Activated CD8-positive, alpha-beta T cell treated with anti-CD3 and anti-CD28 coated beads, Interleukin-2, amount 10 ng/mL, durations not matched to agents 7 days and 5 days (primary cell): ENCODE measurements at regions of chr2 and their contacts with region 1.

Region 1: GRCh38 chr2:120174963-120175581 is 48.1 kb downstream of the TMEM185B start:
- DNase-seq: peak; percentile 46
- ATAC-seq: no peak
- H3K4me3 Mint-ChIP-seq: no peak overlapping the region
- H3K27ac Mint-ChIP-seq: peak overlapping the region; percentile 64
- H3K4me1 Mint-ChIP-seq: peaks cover 51% of the 10 kb centered on the region
- H3K27me3 Mint-ChIP-seq: no peaks in the 10 kb centered on the region

Region 2: GRCh38 chr2:119721462-119721861 is 453.6 kb before region 1 on chr2:
- CTCF ChIA-PET with region 1: interaction called, 11 read pairs
- POLR2A ChIA-PET with region 1: no interaction called
- DNase-seq: no peak
- ATAC-seq: no peak
- H3K4me3 Mint-ChIP-seq: no peak overlapping the region
- H3K27ac Mint-ChIP-seq: no peak overlapping the region
- H3K4me1 Mint-ChIP-seq: peaks cover 10% of the 10 kb centered on the region
- H3K27me3 Mint-ChIP-seq: no peaks in the 10 kb centered on the region

Region 3: DNA sequence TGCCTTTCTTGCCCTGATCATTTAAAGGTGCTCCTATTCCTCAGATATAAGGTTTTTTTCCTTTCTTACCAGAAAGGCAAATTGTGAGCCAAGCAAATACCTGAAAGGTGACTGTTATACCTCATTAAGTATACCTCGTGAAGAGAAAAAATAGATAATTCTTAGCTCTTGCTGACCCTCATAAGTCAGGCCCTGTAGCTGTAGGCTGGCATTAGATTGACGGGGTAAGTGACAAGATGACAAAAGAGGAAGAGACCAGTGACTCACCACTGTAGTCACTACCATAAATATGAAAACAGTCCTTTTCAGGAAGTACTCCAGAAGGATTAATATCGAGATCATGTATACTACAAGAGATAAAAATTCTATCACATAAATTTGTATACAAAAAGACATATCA is 310.8 kb before region 1 on chr2:
- CTCF ChIA-PET with region 1: interaction called, 10 read pairs
- POLR2A ChIA-PET with region 1: no interaction called
- DNase-seq: no peak
- ATAC-seq: no peak
- H3K4me3 Mint-ChIP-seq: no peak overlapping the region
- H3K27ac Mint-ChIP-seq: no peak overlapping the region
- H3K4me1 Mint-ChIP-seq: peaks cover 50% of the 10 kb centered on the region
- H3K27me3 Mint-ChIP-seq: no peaks in the 10 kb centered on the region

Region 4: DNA sequence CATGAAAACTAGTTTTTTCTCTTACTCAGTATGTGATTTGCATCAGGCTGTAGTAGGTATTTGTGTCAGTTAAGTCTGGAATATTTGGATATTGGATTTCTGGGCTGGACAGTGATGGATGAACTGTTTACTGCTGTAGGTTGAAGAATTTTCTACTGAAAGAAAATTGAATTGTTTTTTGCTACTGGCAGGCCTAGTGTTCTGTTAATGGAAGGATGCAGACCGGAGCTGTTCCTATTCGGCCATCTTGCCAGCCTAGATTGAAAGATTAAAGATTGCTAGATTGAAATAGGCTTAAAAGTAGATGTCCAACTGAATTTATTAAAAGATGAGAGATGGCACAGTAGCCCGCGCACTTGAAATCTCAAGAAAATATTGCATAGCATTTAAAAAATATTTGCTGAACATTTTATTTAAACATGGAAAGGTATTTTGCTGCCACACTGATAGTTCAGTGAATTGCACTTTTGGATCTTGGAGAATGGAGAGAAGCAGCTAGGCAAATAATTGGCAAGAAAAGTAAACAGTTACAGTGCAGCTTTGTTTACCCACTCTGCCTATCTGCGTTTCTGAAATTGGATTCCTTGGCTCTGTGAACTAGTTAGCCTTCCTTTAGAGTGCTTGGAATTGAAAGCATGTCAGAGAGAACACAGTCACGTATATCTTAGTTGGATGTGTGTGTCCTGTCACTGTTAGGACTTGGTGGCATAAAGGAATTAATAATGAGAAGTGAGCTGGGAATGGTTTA is 108.1 kb before region 1 on chr2:
- CTCF ChIA-PET with region 1: no interaction called
- POLR2A ChIA-PET with region 1: no interaction called
- DNase-seq: no peak
- ATAC-seq: no peak
- H3K4me3 Mint-ChIP-seq: no peak overlapping the region
- H3K27ac Mint-ChIP-seq: no peak overlapping the region
- H3K4me1 Mint-ChIP-seq: no peaks in the 10 kb centered on the region
- H3K27me3 Mint-ChIP-seq: no peaks in the 10 kb centered on the region

Region 5: DNA sequence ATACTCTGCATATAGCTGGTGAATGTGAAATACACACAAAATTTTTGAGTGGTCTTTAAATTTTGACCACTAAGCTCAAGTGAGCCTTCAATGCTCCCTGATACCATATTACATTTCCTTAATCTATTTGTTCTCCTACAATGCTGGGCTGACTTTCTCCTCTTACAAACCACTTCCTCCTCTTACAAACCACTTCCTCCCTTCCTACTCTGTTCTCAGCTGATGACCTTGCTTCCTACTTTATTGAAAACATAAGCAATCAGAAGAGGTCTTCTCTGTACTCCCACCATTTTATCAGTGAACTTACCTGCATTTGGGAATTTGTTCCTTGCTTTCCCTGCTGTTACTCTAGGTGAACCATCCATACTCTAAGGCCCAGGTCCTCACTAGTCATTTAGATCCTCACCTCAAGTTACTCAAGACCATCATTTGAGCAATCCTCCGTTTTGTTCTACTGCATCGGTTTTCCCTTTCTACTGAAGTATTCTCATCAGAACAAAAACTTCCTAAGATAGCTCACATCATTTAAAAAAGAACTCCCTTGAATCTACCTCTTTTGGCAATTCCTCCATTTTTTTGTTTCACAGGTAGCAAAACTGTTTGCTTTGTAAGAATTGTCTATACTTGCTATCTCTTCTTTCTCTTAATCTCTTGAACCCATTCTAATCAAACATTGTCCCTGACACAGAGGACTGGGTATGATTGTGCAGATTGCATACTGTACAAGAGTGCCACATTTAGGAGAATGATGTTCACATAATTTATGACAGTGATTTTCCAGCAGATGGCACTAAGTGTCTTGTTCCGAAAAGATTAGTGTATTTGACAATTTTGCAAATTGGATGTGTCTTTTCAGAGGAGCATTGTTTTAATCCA is 65.6 kb before region 1 on chr2:
- CTCF ChIA-PET with region 1: interaction called, 240 read pairs
- POLR2A ChIA-PET with region 1: interaction called, 6 read pairs
- DNase-seq: peak; percentile 48
- ATAC-seq: peak; percentile 89
- H3K4me3 Mint-ChIP-seq: peak overlapping the region; percentile 56
- H3K27ac Mint-ChIP-seq: peak overlapping the region; percentile 75
- H3K4me1 Mint-ChIP-seq: peaks cover 21% of the 10 kb centered on the region
- H3K27me3 Mint-ChIP-seq: no peaks in the 10 kb centered on the region

Region 6: GRCh38 chr2:120223034-120223912 is 48.2 kb after region 1 on chr2 and contains the start of gene TMEM185B:
- CTCF ChIA-PET with region 1: interaction called, 16 read pairs
- POLR2A ChIA-PET with region 1: interaction called, 6 read pairs
- DNase-seq: peak; percentile 91
- ATAC-seq: peak; percentile 94
- H3K4me3 Mint-ChIP-seq: peak within 1 kb of the TSS; percentile 83
- H3K27ac Mint-ChIP-seq: peak within 1 kb of the TSS; percentile 91
- H3K4me1 Mint-ChIP-seq: peaks cover 67% of the 10 kb centered on the region
- H3K27me3 Mint-ChIP-seq: no peaks in the 10 kb centered on the region
- total RNA-seq, gene TMEM185B: 25.6 to 25.8 TPM

Region 7: GRCh38 chr2:120749506-120750431 is 574.7 kb after region 1 on chr2:
- CTCF ChIA-PET with region 1: no interaction called
- POLR2A ChIA-PET with region 1: no interaction called
- DNase-seq: no peak
- ATAC-seq: no peak
- H3K4me3 Mint-ChIP-seq: no peak overlapping the region
- H3K27ac Mint-ChIP-seq: no peak overlapping the region
- H3K4me1 Mint-ChIP-seq: no peaks in the 10 kb centered on the region
- H3K27me3 Mint-ChIP-seq: peaks cover 6% of the 10 kb centered on the region